K562 (cell line): ENCODE measurements at regions of chr12 and their contacts with region 1.

Region 1: DNA sequence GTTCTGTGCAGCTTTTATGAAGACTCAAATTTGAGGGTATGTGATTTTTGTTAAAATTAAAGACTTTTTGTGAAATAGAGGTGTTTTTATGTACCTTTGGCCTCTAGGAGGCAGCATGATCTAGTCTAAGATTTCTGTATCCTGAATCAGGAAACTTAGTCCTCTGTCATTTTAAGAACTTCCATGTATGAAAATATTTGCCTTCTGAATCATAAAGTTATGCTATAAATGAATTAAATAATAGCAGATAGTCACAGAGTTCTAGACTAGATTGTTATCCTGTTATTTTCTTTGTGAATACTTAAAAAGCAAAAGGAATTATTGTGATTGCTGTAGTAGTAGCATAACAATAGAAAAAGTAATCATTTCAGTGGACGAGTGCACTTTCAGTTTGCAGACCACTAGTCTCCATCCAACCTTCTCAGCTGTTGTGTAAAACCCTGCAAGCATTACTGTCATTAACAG is 56.3 kb downstream of the FGD4 start:
- DNase-seq: peak; percentile 31 to 62 (median 39)
- ATAC-seq: peak; percentile 54; the same call in 1 of the 3 replicates
- H3K4me3 ChIP-seq: no peak overlapping the region
- H3K27ac ChIP-seq: no peak overlapping the region
- H3K4me1 ChIP-seq: no peaks in the 10 kb centered on the region
- H3K27me3 ChIP-seq: peaks cover 0 to 2% of the 10 kb centered on the region in 2 experiments; a peak in 1 of 5 replicates
- CTCF ChIP-seq: peak; percentile 35 to 78 (median 51); a peak in 4 of 6 replicates
- EP300 ChIP-seq: no peak
- POLR2A ChIP-seq: no peak
- RAD21 ChIP-seq: peak; percentile 82 to 85

Region 2: DNA sequence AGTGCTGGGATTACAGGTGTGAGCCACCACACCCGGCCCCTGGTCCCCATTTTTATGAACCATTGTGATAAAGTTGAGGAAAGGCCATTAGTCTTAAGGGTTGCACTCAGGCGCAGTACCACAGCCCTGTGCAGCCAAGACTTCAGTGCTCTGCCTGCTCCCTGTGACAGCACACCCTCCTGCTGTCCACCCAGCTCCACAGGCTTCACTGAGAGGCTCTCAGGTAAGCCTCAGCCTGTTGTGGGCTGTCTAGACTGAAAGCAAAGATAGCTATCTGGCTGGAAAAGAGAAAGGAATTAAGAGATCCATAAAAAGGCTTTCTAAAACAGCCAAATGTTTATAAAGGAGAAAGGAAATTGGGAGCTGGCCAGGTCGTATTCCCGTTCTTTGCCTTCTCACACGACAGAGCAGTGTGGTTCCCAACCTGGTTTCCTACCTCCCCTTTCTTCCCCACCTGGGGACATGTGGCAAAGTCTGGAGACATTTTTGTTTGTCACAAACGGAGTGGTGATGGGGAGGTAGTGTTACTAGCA is 204.3 kb after region 1 on chr12:
- CTCF ChIA-PET with region 1: interaction called, 5 read pairs
- POLR2A ChIA-PET with region 1: no interaction called
- in situ Hi-C with region 1: loop called (anchors 5 kb)
- intact Hi-C with region 1: loop called (anchors 1 kb)
- DNase-seq: no peak
- ATAC-seq: peak; percentile 33; the same call in 2 of the 3 replicates
- H3K4me3 ChIP-seq: no peak overlapping the region
- H3K27ac ChIP-seq: no peak overlapping the region
- H3K4me1 ChIP-seq: no peaks in the 10 kb centered on the region
- H3K27me3 ChIP-seq: peaks cover 10 to 24% of the 10 kb centered on the region in 2 experiments; a peak in 3 of 5 replicates
- CTCF ChIP-seq: no peak
- EP300 ChIP-seq: no peak
- POLR2A ChIP-seq: no peak
- RAD21 ChIP-seq: no peak

Region 3: GRCh38 chr12:32671930-32672780 is 216.5 kb after region 1 on chr12:
- CTCF ChIA-PET with region 1: no interaction called
- POLR2A ChIA-PET with region 1: no interaction called
- in situ Hi-C with region 1: loop called (anchors 5 kb)
- intact Hi-C with region 1: loop called (anchors 1 kb)
- DNase-seq: peak; percentile 41 to 53 (median 42)
- ATAC-seq: peak; percentile 83
- H3K4me3 ChIP-seq: no peak overlapping the region
- H3K27ac ChIP-seq: no peak overlapping the region
- H3K4me1 ChIP-seq: no peaks in the 10 kb centered on the region; a peak in 1 of 5 replicates
- H3K27me3 ChIP-seq: no peaks in the 10 kb centered on the region
- CTCF ChIP-seq: peak; percentile 46 to 66 (median 49); a peak in 5 of 6 replicates
- EP300 ChIP-seq: no peak
- POLR2A ChIP-seq: no peak
- RAD21 ChIP-seq: peak; percentile 44 to 74

Region 4: GRCh38 chr12:32755654-32756475 is 300.2 kb after region 1 on chr12 and contains the start of gene YARS2:
- CTCF ChIA-PET with region 1: interaction called, 5 read pairs
- POLR2A ChIA-PET with region 1: interaction called, 4 read pairs
- in situ Hi-C with region 1: no loop called
- intact Hi-C with region 1: loop called (anchors 1 kb)
- DNase-seq: peak; percentile 83 to 98 (median 88)
- ATAC-seq: peak; percentile 95
- H3K4me3 ChIP-seq: peak within 1 kb of the TSS; percentile 73
- H3K27ac ChIP-seq: peak within 1 kb of the TSS; percentile 69
- H3K4me1 ChIP-seq: peaks cover 4 to 5% of the 10 kb centered on the region in 2 experiments; a peak in 1 of 5 replicates
- H3K27me3 ChIP-seq: no peaks in the 10 kb centered on the region
- CTCF ChIP-seq: peak; percentile 74 to 90 (median 89)
- EP300 ChIP-seq: no peak
- POLR2A ChIP-seq: peak; percentile 97
- RAD21 ChIP-seq: peak; percentile 95 to 97
- polyA plus RNA-seq, gene YARS2: 15.2 to 18.4 TPM